ENCODE measurements at regions of chr11 and their contacts with region 1.

Region 1: GRCh38 chr11:2428322-2428795 is 16.0 kb downstream of the TRPM5 start:
- ATAC-seq: peak; percentile 51 to 99 (median 80)
- H3K4me3 ChIP-seq: no peak overlapping the region
- H3K27ac ChIP-seq: no peak overlapping the region
- H3K4me1 ChIP-seq: no peaks in the 10 kb centered on the region

Region 2: GRCh38 chr11:2196970-2197770 is 231.2 kb before region 1 on chr11:
- in situ Hi-C with region 1: loop called in 7 of 9 experiments (anchors 25 kb)
- ATAC-seq: peak; percentile 66 to 88 (median 84)
- H3K4me3 ChIP-seq: no peak overlapping the region
- H3K27ac ChIP-seq: no peak overlapping the region
- H3K4me1 ChIP-seq: peaks cover 0 to 5% of the 10 kb centered on the region in 2 donors

Region 3: GRCh38 chr11:2511421-2512369 is 83.3 kb after region 1 on chr11:
- in situ Hi-C with region 1: loop called in 2 of 9 experiments (anchors 10 kb)
- ATAC-seq: peak in 1 of 8 experiments; percentile 23
- H3K4me3 ChIP-seq: no peak overlapping the region
- H3K27ac ChIP-seq: no peak overlapping the region
- H3K4me1 ChIP-seq: no peaks in the 10 kb centered on the region

Region 4: GRCh38 chr11:2526808-2527381 is 98.5 kb after region 1 on chr11:
- in situ Hi-C with region 1: loop called in 2 of 9 experiments (anchors 5 to 10 kb)
- ATAC-seq: peak in 3 of 8 experiments; percentile 41 to 84 (median 45)
- H3K4me3 ChIP-seq: no peak overlapping the region
- H3K27ac ChIP-seq: no peak overlapping the region
- H3K4me1 ChIP-seq: peaks cover 0 to 2% of the 10 kb centered on the region in 2 donors

Region 5: GRCh38 chr11:2532704-2533586 is 104.6 kb after region 1 on chr11:
- in situ Hi-C with region 1: loop called in 2 of 9 experiments (anchors 5 to 10 kb)
- ATAC-seq: peak; percentile 73 to 92 (median 78)
- H3K4me3 ChIP-seq: no peak overlapping the region
- H3K27ac ChIP-seq: peak overlapping the region; percentile 28 to 82
- H3K4me1 ChIP-seq: peaks cover 14 to 23% of the 10 kb centered on the region in 2 donors

Measured in motor neuron (in vitro differentiated cells).